ENCODE measurements at regions of chr10 and their contacts with region 1.

Region 1: DNA sequence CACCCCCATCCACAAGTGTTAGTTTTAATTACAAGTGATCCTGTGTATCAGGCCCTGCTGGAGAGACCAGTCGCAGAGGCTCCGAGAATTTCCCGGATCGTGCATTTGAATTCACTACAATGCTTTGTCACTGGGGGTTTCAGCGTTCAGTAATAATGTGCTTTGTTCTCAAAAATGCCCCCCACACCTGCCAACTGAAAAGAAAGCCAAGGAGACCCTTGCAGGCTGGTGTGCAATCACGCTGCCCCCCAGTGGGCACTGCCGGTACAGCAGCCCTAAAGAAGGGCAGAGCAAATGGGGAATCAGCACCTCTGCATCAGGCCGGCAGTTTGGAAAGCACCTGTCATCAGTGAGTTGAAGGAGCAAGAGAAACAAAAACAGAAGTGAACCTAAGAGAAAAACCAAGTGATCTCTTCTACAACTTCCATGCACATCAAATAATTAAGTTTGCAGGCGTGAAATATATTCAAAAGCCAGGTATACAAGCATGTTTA is 177.6 kb downstream of the PARD3 start:
- ATAC-seq: peak in 7 of 8 experiments; percentile 36 to 77 (median 72)
- H3K4me3 ChIP-seq: peak overlapping the region in 1 of 5 donors; percentile 3
- H3K27ac ChIP-seq: no peak overlapping the region
- H3K4me1 ChIP-seq: peaks cover 15 to 33% of the 10 kb centered on the region in 2 donors

Region 2: GRCh38 chr10:33193057-33193700 is 1444.3 kb before region 1 on chr10:
- in situ Hi-C with region 1: loop called in 1 of 9 experiments (anchors 25 kb)
- ATAC-seq: peak; percentile 46 to 97 (median 92)
- H3K4me3 ChIP-seq: no peak overlapping the region
- H3K27ac ChIP-seq: no peak overlapping the region
- H3K4me1 ChIP-seq: peaks cover 0 to 44% of the 10 kb centered on the region in 2 donors

Region 3: GRCh38 chr10:33306701-33307512 is 1330.6 kb before region 1 on chr10:
- in situ Hi-C with region 1: loop called in 2 of 9 experiments (anchors 25 kb)
- ATAC-seq: peak in 3 of 8 experiments; percentile 76 to 81 (median 77)
- H3K4me3 ChIP-seq: no peak overlapping the region
- H3K27ac ChIP-seq: no peak overlapping the region
- H3K4me1 ChIP-seq: peaks cover 26 to 36% of the 10 kb centered on the region in 2 donors

Region 4: GRCh38 chr10:33330543-33331378 is 1306.7 kb before region 1 on chr10:
- in situ Hi-C with region 1: loop called in 3 of 9 experiments (anchors 10 to 25 kb)
- ATAC-seq: peak; percentile 8 to 27 (median 19)
- H3K4me3 ChIP-seq: peak overlapping the region; percentile 59 to 95 (median 69)
- H3K27ac ChIP-seq: no peak overlapping the region
- H3K4me1 ChIP-seq: peaks cover 9 to 42% of the 10 kb centered on the region in 2 donors

Measured in motor neuron (in vitro differentiated cells).